ENCODE measurements at regions of chr4 and their contacts with region 1.

Region 1: GRCh38 chr4:140049024-140049848 is 104.7 kb downstream of the MAML3 start:
- DNase-seq: peak; percentile 59
- H3K4me3 Mint-ChIP-seq: peak overlapping the region; percentile 43
- H3K27ac Mint-ChIP-seq: peak overlapping the region; percentile 62
- H3K4me1 Mint-ChIP-seq: peaks cover 40% of the 10 kb centered on the region
- H3K27me3 Mint-ChIP-seq: peaks cover 21% of the 10 kb centered on the region

Region 2: GRCh38 chr4:139656614-139657486 is 392.4 kb before region 1 on chr4:
- CTCF ChIA-PET with region 1: interaction called, 14 read pairs
- DNase-seq: peak; percentile 62
- H3K4me3 Mint-ChIP-seq: peak overlapping the region; percentile 58
- H3K27ac Mint-ChIP-seq: peak overlapping the region; percentile 87
- H3K4me1 Mint-ChIP-seq: peaks cover 30% of the 10 kb centered on the region
- H3K27me3 Mint-ChIP-seq: peaks cover 10% of the 10 kb centered on the region

Region 3: GRCh38 chr4:139734875-139735380 is 314.3 kb before region 1 on chr4:
- CTCF ChIA-PET with region 1: interaction called, 12 read pairs
- DNase-seq: peak; percentile 68
- H3K4me3 Mint-ChIP-seq: peak overlapping the region; percentile 55
- H3K27ac Mint-ChIP-seq: no peak overlapping the region
- H3K4me1 Mint-ChIP-seq: peaks cover 15% of the 10 kb centered on the region
- H3K27me3 Mint-ChIP-seq: peaks cover 64% of the 10 kb centered on the region

Region 4: DNA sequence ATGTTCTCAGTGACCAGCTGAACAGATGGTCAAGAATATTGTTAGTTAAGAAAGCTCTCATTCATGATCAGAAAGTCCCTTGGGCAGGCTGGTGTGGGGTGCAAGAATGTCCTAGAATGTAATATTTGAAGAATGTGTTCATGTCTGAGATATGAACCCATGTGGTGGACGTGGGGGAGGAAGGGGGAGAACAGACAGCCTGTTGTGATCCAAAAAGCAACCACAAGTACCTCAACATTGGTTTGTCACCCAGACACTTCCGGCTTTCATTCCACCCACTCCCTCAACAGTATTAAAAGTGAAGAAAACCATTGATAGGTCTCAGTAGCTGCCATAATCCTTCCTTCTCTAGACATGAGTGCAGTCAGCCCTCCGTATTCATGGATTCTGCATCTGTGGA is 22.6 kb after region 1 on chr4:
- CTCF ChIA-PET with region 1: interaction called, 12 read pairs
- DNase-seq: peak; percentile 79
- H3K4me3 Mint-ChIP-seq: peak overlapping the region; percentile 46
- H3K27ac Mint-ChIP-seq: peak overlapping the region; percentile 83
- H3K4me1 Mint-ChIP-seq: peaks cover 60% of the 10 kb centered on the region
- H3K27me3 Mint-ChIP-seq: peaks cover 45% of the 10 kb centered on the region

Region 5: GRCh38 chr4:140095694-140096482 is 46.7 kb after region 1 on chr4:
- CTCF ChIA-PET with region 1: interaction called, 11 read pairs
- DNase-seq: peak; percentile 71
- H3K4me3 Mint-ChIP-seq: peak overlapping the region; percentile 68
- H3K27ac Mint-ChIP-seq: peak overlapping the region; percentile 92
- H3K4me1 Mint-ChIP-seq: peaks cover 84% of the 10 kb centered on the region
- H3K27me3 Mint-ChIP-seq: no peaks in the 10 kb centered on the region

Region 6: DNA sequence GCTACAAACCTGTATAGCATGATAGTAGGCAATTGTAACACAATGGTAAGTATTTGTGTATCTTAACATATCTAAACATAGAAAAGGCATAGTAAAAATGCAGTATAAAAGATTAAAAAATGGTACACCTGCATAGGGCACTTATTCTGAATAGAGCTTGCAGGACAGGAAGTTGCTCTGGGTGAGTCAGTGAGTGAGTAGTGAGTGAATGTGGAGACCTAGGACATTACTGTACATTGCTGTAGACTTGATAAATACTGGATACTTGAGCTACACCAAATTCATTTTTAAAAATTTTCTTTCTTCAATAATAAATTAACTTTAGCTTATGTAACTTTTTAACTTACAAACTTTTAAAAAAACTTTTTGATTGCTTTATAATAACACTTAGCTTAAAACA is 172.9 kb after region 1 on chr4:
- CTCF ChIA-PET with region 1: no interaction called
- DNase-seq: no peak
- H3K4me3 Mint-ChIP-seq: no peak overlapping the region
- H3K27ac Mint-ChIP-seq: no peak overlapping the region
- H3K4me1 Mint-ChIP-seq: no peaks in the 10 kb centered on the region
- H3K27me3 Mint-ChIP-seq: peaks cover 12% of the 10 kb centered on the region

Region 7: GRCh38 chr4:140237606-140237986 is 188.4 kb after region 1 on chr4:
- CTCF ChIA-PET with region 1: interaction called, 14 read pairs
- DNase-seq: no peak
- H3K4me3 Mint-ChIP-seq: no peak overlapping the region
- H3K27ac Mint-ChIP-seq: no peak overlapping the region
- H3K4me1 Mint-ChIP-seq: peaks cover 30% of the 10 kb centered on the region
- H3K27me3 Mint-ChIP-seq: peaks cover 23% of the 10 kb centered on the region

Region 8: GRCh38 chr4:140252742-140253555 is 203.7 kb after region 1 on chr4:
- CTCF ChIA-PET with region 1: interaction called, 47 read pairs
- DNase-seq: peak; percentile 65
- H3K4me3 Mint-ChIP-seq: peak overlapping the region; percentile 61
- H3K27ac Mint-ChIP-seq: no peak overlapping the region
- H3K4me1 Mint-ChIP-seq: peaks cover 10% of the 10 kb centered on the region
- H3K27me3 Mint-ChIP-seq: peaks cover 35% of the 10 kb centered on the region

Measured in activated naive CD4-positive, alpha-beta T cell treated with anti-CD3 and anti-CD28 coated beads, Interleukin-2, amount 10 ng/mL, durations not matched to agents 7 days and 5 days (primary cell).